Dorsolateral prefrontal cortex (tissue), 120 donors: ENCODE measurements at regions of chr1 and their contacts with region 1.

Region 1: GRCh38 chr1:235783148-235783776 is 83.4 kb downstream of the LYST start:
- DNase-seq: no peak
- H3K4me3 ChIP-seq: no peak overlapping the region
- H3K27ac ChIP-seq: no peak overlapping the region
- H3K27me3 ChIP-seq: no peaks in the 10 kb centered on the region
- CTCF ChIP-seq: peak; percentile 30 to 72 (median 57)

Region 2: GRCh38 chr1:235513495-235514366 is 269.5 kb before region 1 on chr1:
- intact Hi-C with region 1: loop called in 1 of 2 experiments (anchors 5 kb)
- DNase-seq: peak in 1 of 10 donors; percentile 38
- H3K4me3 ChIP-seq: no peak overlapping the region
- H3K27ac ChIP-seq: no peak overlapping the region
- H3K27me3 ChIP-seq: no peaks in the 10 kb centered on the region
- CTCF ChIP-seq: peak; percentile 86 to 100 (median 94)